RWPE1 (cell line): ENCODE measurements at regions of chr5 and their contacts with region 1.

Region 1: DNA sequence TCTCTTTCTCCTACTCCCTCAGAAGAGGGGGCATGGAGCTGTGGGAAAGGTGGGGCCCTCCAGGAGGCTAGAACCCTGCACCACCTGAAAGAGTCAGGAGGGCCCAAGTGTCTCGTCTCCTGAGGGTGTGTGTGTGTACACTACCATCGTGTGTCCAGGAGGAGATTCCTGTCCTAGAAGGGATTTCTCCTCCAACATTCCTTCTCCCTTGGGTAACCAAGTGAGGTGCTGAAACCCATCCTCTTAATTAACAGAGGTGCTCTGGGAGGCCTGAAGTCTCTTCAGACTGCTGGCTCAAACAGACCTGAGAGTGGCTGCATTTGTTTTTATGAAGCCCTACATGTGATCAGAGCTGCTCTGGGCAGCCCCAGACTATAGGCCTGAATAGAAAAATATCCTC is 61.1 kb upstream of the FAM169A start:
- DNase-seq: no peak
- H3K27ac ChIP-seq: no peak overlapping the region
- CTCF ChIP-seq: no peak

Region 2: DNA sequence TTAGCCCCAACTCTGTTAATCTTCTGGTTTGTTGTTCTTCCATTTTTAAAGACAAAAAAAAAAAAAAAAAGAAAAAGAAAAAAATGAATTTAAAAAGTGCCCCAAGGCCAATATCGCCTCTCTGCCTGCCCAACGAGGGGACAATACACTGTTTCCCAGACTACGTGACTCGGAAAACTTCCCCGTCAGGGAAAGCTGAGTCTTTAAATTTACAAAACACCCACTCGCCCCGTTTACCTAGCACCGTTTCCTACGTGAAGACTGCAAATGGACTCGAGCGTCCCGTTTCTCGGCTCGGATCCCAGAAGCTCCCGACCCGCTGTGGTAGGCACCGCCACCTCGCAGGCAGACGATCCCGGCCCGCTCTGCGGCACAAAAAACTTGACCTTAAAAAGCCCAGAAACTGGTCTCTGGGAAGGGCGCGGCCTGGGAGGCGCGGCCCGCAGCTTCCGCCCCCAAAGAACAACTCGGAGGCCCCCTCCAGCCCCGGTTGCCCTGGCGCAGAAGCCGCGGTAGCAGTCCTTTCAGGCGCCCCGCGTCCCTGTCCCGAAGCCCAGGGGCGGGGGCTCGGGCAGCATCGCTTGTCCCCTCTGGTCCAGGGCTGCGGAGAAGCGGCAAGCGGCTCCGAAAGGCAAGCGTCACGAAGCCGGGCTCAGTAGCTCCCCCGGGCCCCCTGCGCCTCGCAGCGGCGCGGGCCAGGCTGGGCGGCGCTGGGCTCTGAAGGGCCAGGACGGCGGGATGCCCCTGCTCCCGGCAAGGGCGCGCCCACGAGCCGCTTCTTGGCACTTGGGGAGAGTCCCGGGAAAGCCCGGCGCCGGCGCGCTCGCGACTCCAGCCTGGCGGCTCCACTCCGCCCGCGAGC is 125.1 kb after region 1 on chr5 and contains the start of gene GCNT4:
- CTCF ChIA-PET with region 1: interaction called, 11 read pairs
- POLR2A ChIA-PET with region 1: interaction called, 7 read pairs
- DNase-seq: peak; percentile 54
- H3K27ac ChIP-seq: peak within 1 kb of the TSS; percentile 87
- CTCF ChIP-seq: no peak